Left ventricle myocardium superior (tissue), 1 donor: ENCODE measurements at regions of chr18 and their contacts with region 1.

Region 1: GRCh38 chr18:32798209-32798960 is 25.6 kb upstream of the KLHL14 start:
- DNase-seq: no peak
- ATAC-seq: no peak

Region 2: DNA sequence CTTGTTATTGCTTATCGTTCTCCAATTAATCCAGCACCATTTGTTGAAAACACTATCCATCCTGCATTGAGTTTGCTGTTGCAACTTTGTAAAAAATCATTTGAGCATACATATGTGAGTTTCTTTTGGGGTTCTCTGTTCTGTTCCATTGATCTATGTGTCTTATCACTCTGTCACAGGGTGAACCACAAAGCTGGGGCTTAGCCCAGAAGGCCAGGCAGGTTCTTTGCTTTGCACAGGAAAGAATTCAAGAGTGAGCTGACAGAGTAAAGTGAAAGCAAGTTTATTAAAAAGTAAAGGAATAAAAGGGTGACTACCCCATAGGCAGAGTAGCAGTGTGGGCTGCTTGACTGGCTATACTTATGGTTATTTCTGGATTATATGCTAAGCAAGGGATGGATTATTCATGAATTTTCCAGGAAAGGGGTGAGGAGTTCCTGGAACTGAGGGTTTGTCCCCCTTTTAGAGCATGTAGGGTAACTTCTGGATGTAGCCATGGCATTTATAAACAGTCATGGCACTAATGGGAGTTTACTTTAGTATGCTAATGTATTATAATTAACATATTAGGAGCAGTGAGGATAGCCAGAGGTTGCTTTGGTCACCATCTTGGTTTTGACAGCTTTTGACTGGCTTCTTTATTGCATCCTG is 659.9 kb before region 1 on chr18:
- intact Hi-C with region 1: no loop called
- DNase-seq: no peak
- ATAC-seq: no peak

Region 3: GRCh38 chr18:32669549-32670165 is 128.7 kb before region 1 on chr18:
- intact Hi-C with region 1: no loop called
- DNase-seq: peak; percentile 22
- ATAC-seq: no peak

Region 4: DNA sequence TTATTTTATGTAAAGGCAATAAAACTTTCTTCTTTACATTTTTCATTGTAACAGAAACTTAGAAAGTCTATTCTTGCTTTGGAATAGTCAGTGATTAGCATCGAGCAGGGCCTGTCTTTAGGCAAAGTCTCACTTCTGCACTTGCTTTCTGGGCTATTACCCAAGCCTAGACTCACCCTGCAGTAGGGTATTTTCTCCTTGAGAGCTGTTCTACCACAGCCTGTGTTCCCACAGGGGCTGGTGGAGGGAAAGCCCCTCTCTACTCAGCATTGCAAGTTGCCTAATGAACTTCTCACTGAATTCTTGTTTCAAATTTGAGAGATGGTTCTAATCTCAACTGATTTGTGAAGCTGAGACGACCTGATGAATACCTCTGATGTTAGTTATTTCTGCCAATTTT is 86.2 kb after region 1 on chr18:
- intact Hi-C with region 1: no loop called
- DNase-seq: no peak
- ATAC-seq: no peak

Region 5: GRCh38 chr18:32937007-32937540 is 138.7 kb after region 1 on chr18:
- intact Hi-C with region 1: loop called (anchors 5 kb)
- DNase-seq: no peak
- ATAC-seq: no peak

Region 6: GRCh38 chr18:33040213-33040612 is 241.8 kb after region 1 on chr18:
- intact Hi-C with region 1: no loop called
- DNase-seq: no peak
- ATAC-seq: no peak